Cardiac septum (tissue), 1 donor: ENCODE measurements at regions of chr19 and their contacts with region 1.

Region 1: GRCh38 chr19:11380653-11381534 is 3.2 kb downstream of the EPOR start:
- DNase-seq: peak; percentile 96

Region 2: GRCh38 chr19:11261941-11262839 is 118.7 kb before region 1 on chr19 and contains the start of gene DOCK6:
- intact Hi-C with region 1: no loop called
- DNase-seq: no peak
- total RNA-seq, gene DOCK6: 50.5 TPM

Region 3: GRCh38 chr19:11293433-11294389 is 87.2 kb before region 1 on chr19:
- intact Hi-C with region 1: loop called (anchors 5 kb)
- DNase-seq: peak; percentile 99

Region 4: GRCh38 chr19:11346092-11346940 is 34.6 kb before region 1 on chr19 and contains the starts of genes CCDC159 and TMEM205:
- intact Hi-C with region 1: loop called (anchors 5 kb)
- DNase-seq: peak; percentile 99
- total RNA-seq, gene CCDC159: 24.2 TPM
- total RNA-seq, gene TMEM205: 75.7 TPM

Region 5: DNA sequence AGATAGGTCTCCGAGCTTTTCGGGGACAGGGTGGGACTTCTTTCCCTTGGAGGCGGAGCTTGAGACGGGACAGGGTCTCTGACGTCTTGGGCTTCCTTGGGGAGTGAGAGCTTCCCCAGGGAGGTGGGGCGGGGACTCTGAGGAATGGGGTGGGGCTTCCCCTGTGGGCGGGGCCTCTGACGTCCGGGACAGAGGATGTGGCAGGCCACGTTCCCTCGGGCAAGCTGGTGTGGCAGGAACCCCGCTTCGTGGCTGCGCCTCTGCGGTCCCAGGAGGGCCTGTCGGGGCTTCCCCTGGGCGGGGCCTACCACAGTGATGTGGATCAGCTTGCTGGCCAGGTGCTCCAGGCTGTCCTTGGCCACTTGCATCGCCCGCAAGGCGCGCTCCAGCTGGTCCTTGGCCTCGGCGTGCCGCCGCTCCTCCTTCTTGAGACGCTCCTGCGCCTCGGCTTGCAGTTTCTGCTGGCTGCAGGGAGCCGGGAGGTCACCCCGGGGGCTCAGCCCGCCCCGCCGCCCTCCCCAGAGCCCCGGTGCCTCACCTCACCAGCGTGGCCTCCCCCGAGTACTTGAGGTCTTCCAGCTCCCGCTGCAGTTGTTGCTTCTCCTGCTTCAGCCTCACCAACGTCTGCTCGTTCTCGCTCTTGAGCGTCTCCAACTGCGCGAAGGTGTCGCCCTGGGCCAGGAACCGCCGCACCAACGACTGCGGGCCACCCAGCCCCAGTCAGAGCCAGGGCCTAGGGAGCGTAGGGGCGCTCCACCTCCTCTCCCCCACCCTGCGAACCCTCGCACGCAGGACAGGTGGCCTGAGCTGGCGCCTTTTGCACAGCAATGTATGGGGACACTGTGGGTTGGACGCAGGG is 41.5 kb after region 1 on chr19:
- intact Hi-C with region 1: loop called (anchors 5 kb)
- DNase-seq: peak; percentile 89

Region 6: DNA sequence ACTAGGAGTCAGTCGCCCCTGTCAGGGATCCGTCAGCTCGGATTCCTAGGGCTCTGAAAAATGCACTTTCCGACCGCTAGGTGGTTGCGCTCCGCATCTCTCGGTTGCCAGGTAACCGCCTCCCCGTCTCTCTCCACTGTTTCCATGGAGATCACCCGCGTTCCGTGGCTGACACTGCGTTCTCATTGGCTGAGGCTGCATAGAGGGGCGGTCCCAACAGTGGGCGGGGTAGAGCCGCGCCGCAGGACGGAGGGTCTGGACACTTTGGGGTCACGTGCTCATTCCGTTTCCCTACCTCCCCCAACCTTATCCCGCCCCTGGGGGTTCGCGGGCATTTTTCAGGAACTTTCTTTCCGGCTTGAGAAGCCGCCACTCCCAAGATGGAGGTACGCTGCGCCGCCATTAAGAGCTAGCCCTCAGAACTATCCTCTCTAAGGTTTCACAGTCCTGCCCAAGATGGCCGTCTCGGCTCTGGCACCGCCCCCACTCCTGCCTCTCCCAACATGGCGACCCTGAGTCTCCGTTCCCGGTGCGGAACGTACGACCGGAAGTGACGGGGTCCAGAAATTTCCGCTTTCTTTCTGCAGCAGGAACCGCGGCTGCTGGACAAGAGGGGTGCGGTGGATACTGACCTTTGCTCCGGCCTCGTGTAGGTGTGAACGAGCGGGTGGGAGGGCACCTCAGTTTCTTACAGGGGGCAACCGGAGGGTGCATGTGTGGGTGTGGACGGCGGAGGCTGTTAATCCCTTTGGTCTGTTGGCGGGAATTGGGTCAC is 54.4 kb after region 1 on chr19 and contains the starts of genes ODAD3 and PRKCSH:
- intact Hi-C with region 1: loop called (anchors 2 kb)
- DNase-seq: peak; percentile 100
- total RNA-seq, gene ODAD3: 0.43 TPM
- total RNA-seq, gene PRKCSH: 100 TPM

Region 7: DNA sequence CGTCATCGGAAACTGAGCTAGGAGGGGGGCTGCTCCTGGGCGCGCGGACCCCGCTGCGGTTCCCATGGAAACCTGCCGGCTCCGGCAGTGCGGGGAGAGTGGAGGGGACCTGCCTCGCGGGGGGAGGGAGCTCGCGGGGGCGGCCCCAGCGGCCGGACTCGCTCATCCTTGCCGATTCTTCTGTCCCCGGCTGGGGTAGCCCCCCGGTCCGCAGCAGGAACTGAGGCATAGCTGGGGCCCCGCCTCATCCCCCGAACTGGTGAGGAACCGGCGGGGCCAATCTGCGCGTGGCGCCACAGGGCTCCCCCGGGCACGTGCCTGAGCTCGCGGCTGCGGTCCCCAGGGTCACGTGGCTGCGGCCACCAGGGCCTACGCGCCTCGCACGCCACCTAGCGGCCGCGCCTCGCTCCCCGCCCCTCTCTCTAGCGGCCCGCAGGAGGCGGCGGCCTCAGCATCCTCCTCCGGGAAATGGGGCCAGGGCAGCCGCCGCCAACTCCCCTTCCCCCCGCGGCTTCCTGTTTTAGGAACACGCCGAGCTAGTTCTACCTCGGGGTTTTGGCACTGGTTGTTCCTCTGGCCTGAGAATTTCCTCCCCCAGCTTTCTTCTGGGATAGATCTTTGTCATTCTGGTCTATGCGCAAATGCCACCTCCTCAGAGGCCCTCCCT is 101.6 kb after region 1 on chr19:
- intact Hi-C with region 1: loop called (anchors 5 kb)
- DNase-seq: peak; percentile 89